Tibial artery (tissue), 4 donors: ENCODE measurements at regions of chr1 and their contacts with region 1.

Region 1: DNA sequence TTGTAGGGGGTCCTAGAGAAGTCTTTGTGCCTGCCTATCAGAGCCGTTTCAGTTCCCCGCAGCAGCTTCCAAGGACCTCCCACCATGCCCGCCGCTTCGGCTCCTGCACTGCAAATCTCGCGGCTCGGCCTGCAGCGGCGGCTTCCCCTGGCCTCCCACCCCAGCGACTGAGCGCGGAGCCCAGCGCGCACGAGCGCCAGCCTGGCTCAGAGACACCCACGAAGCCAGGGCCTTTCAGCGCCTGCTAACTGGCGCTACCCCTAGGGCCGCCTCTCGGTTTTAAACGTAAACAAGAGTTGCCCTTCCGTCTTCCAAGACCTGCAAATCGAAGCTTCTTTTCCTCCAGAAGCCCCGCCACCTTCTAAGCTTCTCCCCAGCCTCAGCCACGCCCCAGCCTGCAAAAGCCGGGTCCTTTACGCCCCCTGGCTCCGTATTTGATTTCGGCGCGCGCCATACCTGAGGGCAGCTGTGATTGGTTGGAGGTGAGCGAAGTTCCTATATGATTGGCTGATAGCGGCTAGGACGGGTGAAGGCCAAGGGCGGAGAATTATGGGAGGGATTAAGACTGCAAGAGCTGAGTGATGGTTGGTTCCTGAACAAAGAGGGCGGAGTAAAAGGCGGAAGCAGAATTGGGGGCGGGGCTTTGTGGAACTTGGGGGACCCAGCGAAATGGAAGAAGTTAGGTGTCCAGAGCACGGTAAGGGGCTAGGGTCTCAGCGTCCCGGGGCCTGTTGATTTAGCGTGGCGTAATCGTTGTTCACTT is at the start of gene TTF2:
- DNase-seq: peak; percentile 95
- H3K4me3 ChIP-seq: peak within 1 kb of the TSS; percentile 77 to 89
- H3K27ac ChIP-seq: peak within 1 kb of the TSS; percentile 81 to 85
- H3K4me1 ChIP-seq: peaks cover 0 to 13% (median 10%) of the 10 kb centered on the region in 4 donors
- H3K27me3 ChIP-seq: no peaks in the 10 kb centered on the region
- CTCF ChIP-seq: peak in 1 of 2 experiments; percentile 26

Region 2: GRCh38 chr1:116504308-116505156 is 555.3 kb before region 1 on chr1:
- intact Hi-C with region 1: loop called (anchors 10 kb)
- DNase-seq: peak; percentile 78 to 85
- H3K4me3 ChIP-seq: no peak overlapping the region
- H3K27ac ChIP-seq: peak overlapping the region; percentile 30 to 53
- H3K4me1 ChIP-seq: peaks cover 0 to 30% (median 22%) of the 10 kb centered on the region in 4 donors
- H3K27me3 ChIP-seq: no peaks in the 10 kb centered on the region
- CTCF ChIP-seq: no peak

Region 3: DNA sequence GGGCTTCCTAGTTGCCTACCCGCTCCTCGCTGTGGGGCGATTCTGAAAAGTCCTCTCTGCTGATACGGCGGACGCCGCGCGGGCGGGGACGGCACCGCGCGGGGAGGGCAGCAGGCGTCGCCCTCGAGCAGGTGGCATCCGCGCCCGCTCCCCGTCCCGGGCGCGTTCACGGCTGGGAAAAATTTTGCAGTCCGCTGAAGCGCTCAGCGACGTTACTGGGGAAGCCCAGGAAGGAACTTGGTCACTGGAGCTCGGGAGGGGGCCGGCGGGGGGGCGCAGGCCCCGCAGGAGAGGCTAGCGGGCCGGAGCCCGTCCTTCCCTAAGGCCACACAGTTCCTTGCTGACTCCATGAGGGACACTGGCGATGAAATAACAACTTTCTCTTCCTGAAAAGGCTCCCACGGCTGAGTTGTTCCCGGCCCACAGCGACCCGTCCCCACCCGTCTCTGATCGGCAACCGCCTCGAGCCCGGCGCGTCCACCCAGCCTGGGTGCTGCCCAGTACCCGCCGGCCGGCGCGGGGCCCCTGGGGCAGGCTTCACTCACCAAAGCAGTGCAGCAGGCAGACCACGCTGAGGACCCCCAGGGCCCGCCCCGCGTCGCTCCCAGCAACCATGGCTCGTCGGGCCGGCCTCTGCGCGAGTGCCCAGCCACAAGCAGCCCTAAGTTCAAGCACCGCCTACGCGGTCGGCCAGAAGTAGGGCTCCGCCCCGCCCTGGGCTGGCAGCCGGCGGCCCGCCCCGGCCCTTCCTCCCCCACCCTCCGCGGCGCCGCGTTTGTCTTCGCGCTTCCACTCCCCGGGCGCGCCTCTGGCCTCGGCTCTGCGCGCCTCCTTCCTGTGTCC is 489.3 kb before region 1 on chr1 and contains the start of gene CD58:
- intact Hi-C with region 1: loop called (anchors 5 kb)
- DNase-seq: peak; percentile 88 to 95
- H3K4me3 ChIP-seq: peak within 1 kb of the TSS; percentile 88 to 90
- H3K27ac ChIP-seq: peak within 1 kb of the TSS; percentile 96
- H3K4me1 ChIP-seq: peaks cover 0 to 47% (median 8%) of the 10 kb centered on the region in 4 donors
- H3K27me3 ChIP-seq: no peaks in the 10 kb centered on the region
- CTCF ChIP-seq: peak; percentile 67 to 82

Region 4: DNA sequence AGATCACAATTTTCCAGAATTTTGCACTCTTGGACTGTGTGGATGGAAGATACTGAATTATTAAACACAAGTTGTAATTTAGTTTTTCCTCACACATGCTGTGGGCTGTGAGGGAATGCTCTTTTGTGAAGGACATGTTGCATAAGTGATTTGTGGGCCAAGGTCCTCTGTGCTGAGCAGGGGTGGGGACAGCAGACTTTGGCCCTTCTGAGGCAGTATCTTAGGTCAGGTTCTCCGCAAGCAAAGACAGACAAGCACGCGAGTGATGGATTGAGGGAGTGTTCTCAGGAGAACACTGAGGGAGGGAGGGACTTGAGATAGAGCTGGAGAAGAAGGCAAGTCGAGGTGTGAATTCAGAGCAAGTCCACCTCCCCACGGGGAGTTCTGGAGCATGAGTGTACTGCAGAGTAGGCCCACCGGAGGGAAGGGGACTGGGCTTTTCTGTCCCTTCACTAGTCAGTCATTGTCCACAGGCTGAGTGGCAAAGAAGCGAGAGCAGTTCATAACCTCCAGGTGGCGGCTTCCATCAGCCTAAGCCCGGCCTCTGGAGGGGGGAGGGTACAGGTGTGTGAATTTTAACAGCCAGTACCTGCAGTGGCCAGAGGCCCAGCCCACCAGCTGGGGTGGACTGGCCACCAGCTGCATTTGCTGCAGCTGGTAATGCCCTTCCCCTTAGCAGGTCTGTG is 77.4 kb before region 1 on chr1:
- intact Hi-C with region 1: no loop called
- DNase-seq: no peak
- H3K4me3 ChIP-seq: no peak overlapping the region
- H3K27ac ChIP-seq: no peak overlapping the region
- H3K4me1 ChIP-seq: peaks cover 0 to 4% (median 0%) of the 10 kb centered on the region in 4 donors
- H3K27me3 ChIP-seq: no peaks in the 10 kb centered on the region
- CTCF ChIP-seq: no peak

Region 5: DNA sequence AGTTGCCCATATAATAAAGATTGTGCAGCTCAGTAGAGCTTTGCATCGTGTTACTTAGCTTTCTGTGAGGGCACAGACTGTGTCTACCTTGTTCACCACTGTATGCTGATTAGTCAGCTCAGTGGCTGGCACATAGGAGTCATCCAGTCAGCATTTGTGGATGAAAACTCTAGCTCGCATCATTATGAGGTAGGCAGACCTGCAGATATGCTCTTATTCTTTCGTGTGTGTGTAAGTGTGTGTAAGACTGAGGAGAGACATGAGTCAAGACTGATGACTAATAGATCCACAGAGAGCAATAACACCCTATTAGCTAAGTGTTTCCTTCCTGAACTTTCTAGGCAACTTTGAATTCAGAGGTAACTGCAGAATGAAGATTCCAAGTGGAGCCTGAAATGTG is 17.4 kb after region 1 on chr1:
- intact Hi-C with region 1: loop called (anchors 1 kb)
- DNase-seq: no peak
- H3K4me3 ChIP-seq: no peak overlapping the region
- H3K27ac ChIP-seq: no peak overlapping the region
- H3K4me1 ChIP-seq: no peaks in the 10 kb centered on the region
- H3K27me3 ChIP-seq: no peaks in the 10 kb centered on the region
- CTCF ChIP-seq: no peak

Region 6: DNA sequence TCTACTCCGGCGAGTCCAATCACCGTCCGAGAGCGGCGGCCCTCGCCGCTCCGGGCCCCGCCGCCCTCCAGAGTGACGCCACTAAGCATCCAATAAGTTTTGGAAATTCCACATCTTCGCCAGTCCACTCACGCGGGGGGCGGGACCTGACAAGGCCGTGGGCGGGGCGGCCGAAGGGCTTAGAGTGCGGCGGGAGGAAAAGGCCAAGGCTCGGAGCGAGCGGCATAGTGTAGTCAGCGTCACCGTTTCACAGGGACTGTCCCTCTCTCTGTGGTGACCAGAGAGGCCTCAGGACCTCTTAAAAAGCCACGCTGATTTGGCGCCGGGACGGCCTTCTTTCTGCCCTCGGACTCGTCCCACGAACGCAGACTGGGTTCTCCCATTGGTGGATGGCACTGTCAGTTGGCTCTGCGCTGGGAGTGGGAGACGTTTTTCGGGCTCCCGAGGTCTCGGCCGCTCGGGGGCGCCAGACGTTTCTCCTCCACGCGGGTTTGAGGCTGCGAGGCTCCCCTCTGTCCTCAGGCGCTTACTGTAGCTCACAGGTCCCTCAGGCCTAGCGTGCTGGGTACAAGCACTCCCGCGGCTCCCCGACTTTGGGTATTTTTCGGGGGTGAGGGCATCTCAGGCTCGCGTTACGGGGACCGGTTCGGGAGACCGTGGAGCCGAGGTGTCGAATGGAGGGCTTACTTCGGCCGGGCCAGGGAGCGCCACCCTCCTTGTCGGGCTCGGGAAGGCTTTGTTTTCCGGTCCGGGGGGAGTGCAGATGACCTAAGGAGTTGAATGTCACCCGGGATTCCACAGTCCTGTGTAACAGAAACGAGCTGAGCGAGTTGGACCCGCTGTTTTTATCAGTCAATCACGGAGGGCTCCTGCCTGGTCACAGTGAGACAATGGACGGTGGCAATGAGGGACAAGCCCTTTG is 62.2 kb after region 1 on chr1:
- intact Hi-C with region 1: loop called (anchors 2 kb)
- DNase-seq: peak; percentile 98
- H3K4me3 ChIP-seq: peak overlapping the region; percentile 75 to 76
- H3K27ac ChIP-seq: peak overlapping the region; percentile 73 to 86
- H3K4me1 ChIP-seq: peaks cover 0 to 15% (median 8%) of the 10 kb centered on the region in 4 donors
- H3K27me3 ChIP-seq: no peaks in the 10 kb centered on the region
- CTCF ChIP-seq: peak; percentile 50 to 68

Region 7: GRCh38 chr1:118396829-118397495 is 1337.1 kb after region 1 on chr1:
- intact Hi-C with region 1: no loop called
- DNase-seq: no peak
- H3K4me3 ChIP-seq: no peak overlapping the region
- H3K27ac ChIP-seq: no peak overlapping the region
- H3K4me1 ChIP-seq: no peaks in the 10 kb centered on the region
- H3K27me3 ChIP-seq: no peaks in the 10 kb centered on the region
- CTCF ChIP-seq: no peak